Cardiac septum (tissue), 1 donor: ENCODE measurements at regions of chr10 and their contacts with region 1.

Region 1: GRCh38 chr10:113563306-113564088 is 10.6 kb downstream of the HABP2 start:
- DNase-seq: peak; percentile 85

Region 2: DNA sequence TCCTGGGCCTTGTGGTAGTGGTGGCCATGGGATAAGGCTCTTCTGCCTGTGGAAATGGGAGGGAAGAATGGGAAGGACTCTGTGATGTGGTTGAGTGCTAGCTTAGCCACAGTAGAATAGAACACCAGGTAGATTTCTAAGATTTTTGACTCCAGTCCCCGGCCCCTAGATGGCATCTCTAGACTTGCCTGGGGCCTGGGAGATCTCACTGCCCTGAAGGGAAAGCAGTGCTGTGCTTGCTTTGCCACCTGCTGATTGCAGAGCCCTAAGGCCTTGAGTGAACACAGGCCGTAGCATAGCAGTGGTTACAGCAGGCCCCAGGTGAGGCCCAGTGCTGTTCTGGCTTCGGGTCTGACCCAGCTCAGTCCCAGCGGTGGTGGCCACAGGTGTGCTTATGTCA is 361.5 kb before region 1 on chr10:
- intact Hi-C with region 1: no loop called
- DNase-seq: no peak

Region 3: GRCh38 chr10:113441220-113441619 is 122.3 kb before region 1 on chr10:
- intact Hi-C with region 1: loop called (anchors 5 kb)
- DNase-seq: no peak